ENCODE measurements at regions of chr9 and their contacts with region 1.

Region 1: DNA sequence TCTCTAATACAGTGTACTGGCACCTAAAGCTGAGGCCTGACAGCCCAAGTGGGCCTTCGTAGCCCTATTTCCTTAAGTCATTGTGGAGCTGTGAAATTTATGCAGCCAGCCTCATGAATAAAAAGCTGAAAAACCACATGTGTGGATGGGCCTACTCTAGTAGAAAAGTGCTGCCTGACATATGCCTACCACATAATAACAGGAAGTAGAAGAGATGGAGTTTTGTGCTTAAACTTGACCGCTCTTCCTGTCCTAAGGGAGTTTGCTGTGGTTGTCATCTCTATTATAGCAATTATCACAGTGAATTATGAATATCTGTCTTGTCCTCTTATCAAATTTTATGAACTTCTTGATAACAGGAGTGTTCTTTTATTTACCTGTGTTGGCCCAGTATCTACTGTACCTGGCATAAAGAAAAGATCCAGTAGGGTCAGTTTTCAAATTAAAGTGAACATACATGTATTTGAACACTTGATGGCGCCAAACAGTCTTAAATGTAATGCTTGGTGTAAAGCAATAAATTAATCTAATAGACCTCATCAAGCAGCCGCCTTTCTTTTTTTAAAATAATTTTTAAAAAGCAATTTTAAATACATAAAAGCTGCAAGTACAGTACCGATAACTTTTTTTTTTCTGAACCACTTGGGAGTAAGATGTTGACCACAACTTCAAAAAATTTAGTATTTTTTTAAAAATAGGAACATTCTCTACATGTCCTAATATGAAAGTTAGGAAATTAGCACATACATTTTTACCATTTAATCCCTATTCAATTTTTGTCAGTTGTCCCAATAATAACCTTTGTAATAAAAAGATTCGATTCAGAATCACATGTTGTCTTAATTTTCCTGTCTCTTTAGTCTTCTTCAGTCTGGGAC is 51.0 kb downstream of the FKTN start:
- DNase-seq: peak; percentile 2
- H3K4me3 ChIP-seq: no peak overlapping the region
- CTCF ChIP-seq: peak; percentile 23

Region 2: GRCh38 chr9:105457560-105458294 is 151.2 kb before region 1 on chr9:
- CTCF ChIA-PET with region 1: no interaction called
- POLR2A ChIA-PET with region 1: no interaction called
- DNase-seq: no peak
- H3K4me3 ChIP-seq: no peak overlapping the region
- CTCF ChIP-seq: no peak

Region 3: DNA sequence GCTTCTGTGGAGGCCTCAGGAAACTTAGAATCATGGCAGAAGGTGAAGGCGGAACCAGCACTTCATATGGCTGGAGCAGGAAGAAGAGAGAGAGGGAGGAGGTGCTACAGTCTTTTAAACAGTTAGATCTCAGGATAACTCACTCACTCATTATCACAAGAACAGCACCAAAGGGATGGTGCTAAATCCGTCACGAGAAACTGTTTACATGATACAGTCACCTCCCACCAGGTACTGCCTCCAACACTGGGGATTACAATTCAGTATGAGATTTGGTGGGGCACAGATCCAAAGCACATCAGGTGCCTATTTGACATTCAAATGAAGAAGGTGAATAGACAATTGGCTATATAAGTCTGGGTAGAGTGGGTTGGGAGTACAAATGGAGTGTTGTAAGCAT is 15.8 kb before region 1 on chr9:
- CTCF ChIA-PET with region 1: interaction called, 18 read pairs
- POLR2A ChIA-PET with region 1: no interaction called
- DNase-seq: no peak
- H3K4me3 ChIP-seq: no peak overlapping the region
- CTCF ChIP-seq: no peak

Region 4: DNA sequence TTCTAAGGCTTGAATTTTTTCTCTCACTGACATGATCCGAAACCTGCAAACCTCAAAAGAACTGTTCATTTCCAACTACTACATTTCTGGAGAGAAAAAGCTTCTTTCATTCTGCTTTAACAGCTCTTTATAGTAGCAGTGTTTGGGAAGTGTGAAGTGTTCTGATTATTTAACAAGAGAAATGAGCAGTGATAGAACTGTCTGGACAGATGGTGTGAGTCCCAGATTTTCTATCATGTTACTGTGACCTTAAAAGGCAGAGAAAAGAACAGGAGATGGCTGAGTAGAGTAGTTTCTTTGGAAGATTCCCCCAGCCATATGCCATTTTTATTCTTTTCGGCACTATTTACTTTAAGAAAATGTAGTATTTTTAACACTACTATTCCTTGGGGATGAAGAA is 12.0 kb after region 1 on chr9:
- CTCF ChIA-PET with region 1: interaction called, 13 read pairs
- POLR2A ChIA-PET with region 1: no interaction called
- DNase-seq: no peak
- H3K4me3 ChIP-seq: no peak overlapping the region
- CTCF ChIP-seq: no peak

Region 5: DNA sequence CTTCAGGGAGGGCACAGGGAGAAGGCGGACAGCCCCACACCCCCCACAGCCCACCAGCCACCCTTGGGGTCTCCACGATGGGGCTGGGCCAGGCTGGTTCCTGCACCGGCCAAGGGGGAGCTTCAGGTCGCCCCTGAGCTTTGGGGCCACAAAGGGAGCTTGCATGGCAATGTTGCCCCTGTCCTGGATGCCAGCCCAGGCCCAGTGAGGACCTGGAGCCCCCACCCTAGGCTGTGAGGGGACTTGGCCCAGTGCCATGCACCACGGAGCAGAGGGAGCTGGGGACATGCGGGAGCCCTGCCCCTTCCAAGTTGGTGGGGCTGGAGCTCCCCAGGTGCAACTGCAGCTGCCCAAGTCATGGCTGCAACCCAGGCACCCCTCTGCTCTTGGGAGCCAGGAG is 103.8 kb after region 1 on chr9:
- CTCF ChIA-PET with region 1: interaction called, 32 read pairs
- POLR2A ChIA-PET with region 1: no interaction called
- DNase-seq: no peak
- H3K4me3 ChIP-seq: no peak overlapping the region
- CTCF ChIP-seq: no peak

Region 6: DNA sequence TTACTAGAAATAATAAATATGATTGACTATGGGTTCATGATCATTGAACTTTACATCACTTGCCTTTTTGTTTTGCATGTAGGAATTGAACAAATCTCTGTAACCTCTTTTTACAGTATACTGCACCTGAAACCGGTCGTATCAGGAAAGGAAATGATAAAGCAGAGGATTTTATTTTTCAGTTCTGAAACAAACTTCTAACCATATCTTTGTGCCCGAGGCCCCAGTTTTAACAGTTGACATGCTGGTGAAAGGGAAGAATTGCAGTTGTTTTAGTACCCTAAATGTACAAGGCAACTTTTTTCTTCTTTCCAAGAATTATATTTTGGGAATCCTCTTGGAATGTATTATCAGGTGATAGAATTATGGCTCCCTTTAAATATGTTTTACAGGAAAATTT is 113.1 kb after region 1 on chr9:
- CTCF ChIA-PET with region 1: interaction called, 32 read pairs
- POLR2A ChIA-PET with region 1: no interaction called
- DNase-seq: no peak
- H3K4me3 ChIP-seq: no peak overlapping the region
- CTCF ChIP-seq: no peak

Measured in AG04449 (cell line).